ENCODE measurements at regions of chr17 and their contacts with region 1.

Region 1: GRCh38 chr17:15260376-15261257 is 4.5 kb downstream of the PMP22 start:
- DNase-seq: peak; percentile 85 to 91 (median 86)
- ATAC-seq: peak; percentile 75
- H3K4me3 ChIP-seq: peak overlapping the region; percentile 21
- H3K4me1 ChIP-seq: peaks cover 41% of the 10 kb centered on the region
- CTCF ChIP-seq: peak; percentile 90

Region 2: DNA sequence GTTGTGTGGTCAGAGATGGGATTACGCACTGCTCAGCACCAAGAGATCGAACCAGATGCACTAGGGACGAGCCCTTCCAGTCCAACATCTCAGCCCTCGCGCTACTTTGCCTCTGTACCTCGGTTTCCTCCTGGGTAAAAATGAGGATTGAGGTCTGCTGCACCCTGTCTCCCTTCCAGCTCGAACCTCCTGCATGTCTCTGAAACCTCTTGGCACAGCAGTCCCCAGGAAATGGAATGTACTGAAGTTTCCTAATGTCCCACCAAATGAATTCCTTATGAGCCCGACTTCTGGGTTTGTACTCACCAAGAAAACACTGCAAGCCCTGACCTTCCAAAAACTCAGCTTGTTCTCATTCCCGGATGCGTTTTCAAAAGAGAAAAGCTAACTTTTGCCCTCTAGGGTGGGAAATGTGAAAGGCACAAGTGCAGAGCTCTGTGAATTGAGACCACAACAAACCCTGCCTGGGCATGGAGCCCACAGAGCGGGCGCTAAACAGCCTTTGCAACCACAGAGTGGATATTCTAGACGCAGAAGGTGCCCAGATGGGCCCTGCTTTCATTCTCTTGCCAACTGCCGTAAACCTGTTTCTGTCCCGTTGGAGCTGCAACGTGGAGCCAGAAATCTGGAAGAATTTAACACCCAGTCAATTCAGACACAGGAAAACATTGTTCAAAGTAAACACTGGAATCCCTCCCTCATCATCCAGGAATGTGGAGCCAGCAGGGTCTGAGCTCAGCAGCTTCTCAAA is 196.5 kb after region 1 on chr17:
- intact Hi-C with region 1: loop called in 1 of 2 experiments (anchors 5 kb)
- DNase-seq: peak in 1 of 3 donors; percentile 29
- ATAC-seq: no peak
- H3K4me3 ChIP-seq: no peak overlapping the region
- H3K4me1 ChIP-seq: peaks cover 10% of the 10 kb centered on the region
- CTCF ChIP-seq: no peak

Region 3: GRCh38 chr17:15502369-15503112 is 241.9 kb after region 1 on chr17:
- intact Hi-C with region 1: loop called (anchors 2 to 5 kb)
- DNase-seq: peak; percentile 86 to 87 (median 87)
- ATAC-seq: peak; percentile 94
- H3K4me3 ChIP-seq: no peak overlapping the region
- H3K4me1 ChIP-seq: peaks cover 9% of the 10 kb centered on the region
- CTCF ChIP-seq: peak; percentile 67

Measured in mucosa of descending colon (tissue), 3 donors.